CD4-positive, alpha-beta memory T cell (primary cell): ENCODE measurements at regions of chr2 and their contacts with region 1.

Region 1: GRCh38 chr2:30421604-30422443 is 25.2 kb upstream of the LCLAT1 start:
- DNase-seq: peak in 4 of 5 donors; percentile 16 to 58 (median 26)
- H3K4me3 ChIP-seq: no peak overlapping the region
- H3K4me3 Mint-ChIP-seq: peak overlapping the region; percentile 23 to 74 (median 61)
- H3K27ac ChIP-seq: peak overlapping the region; percentile 40
- H3K27ac Mint-ChIP-seq: peak overlapping the region; percentile 68 to 93 (median 84)
- H3K4me1 ChIP-seq: peaks cover 33% of the 10 kb centered on the region
- H3K4me1 Mint-ChIP-seq: peaks cover 26 to 47% (median 31%) of the 10 kb centered on the region in 4 donors
- H3K27me3 ChIP-seq: no peaks in the 10 kb centered on the region
- H3K27me3 Mint-ChIP-seq: no peaks in the 10 kb centered on the region

Region 2: DNA sequence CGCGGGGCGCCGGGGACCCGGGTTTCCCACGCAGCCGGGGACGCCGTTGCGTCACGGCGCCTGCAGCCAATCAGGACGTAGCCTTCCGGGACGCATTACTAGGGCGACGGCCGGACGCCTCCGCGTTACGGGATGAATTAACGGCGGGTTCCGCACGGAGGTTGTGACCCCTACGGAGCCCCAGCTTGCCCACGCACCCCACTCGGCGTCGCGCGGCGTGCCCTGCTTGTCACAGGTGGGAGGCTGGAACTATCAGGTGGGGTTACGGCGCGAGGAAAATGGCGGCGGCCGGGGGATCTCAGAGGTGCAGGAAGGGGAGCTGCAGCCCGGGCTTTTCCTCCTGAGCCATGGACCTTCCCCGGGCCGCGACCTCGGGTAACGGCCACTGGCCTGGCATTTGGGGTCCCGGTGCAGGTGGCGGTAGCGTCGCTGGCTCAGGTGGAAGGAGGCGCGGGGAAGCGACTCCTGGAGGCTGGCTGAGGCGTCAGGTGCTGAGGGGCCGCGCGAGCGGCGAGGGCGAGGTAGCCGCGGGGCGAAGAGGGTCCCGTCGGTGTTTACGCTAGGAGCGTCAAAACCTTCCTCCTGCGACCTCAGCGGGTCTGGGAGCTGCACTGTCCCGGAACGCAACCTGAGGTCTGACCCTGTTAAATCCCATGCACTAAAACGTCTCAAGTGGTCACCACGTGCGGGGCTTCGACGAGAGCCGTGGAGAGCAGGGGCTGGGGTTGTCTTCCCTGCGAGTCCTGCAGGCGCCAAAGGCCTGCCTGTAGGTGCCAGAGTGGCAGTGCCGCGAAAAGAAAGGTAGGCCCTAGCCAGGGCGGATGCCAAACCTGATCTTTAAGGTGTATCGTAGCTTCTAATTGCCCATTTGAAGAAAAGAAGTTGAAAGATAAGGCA is 25.6 kb after region 1 on chr2 and contains the start of gene LCLAT1:
- CTCF ChIA-PET with region 1: interaction called, 4 read pairs
- POLR2A ChIA-PET with region 1: interaction called, 15 read pairs
- intact Hi-C with region 1: loop called (anchors 1 kb)
- DNase-seq: peak; percentile 87 to 88 (median 88)
- H3K4me3 ChIP-seq: peak within 1 kb of the TSS; percentile 48 to 96
- H3K4me3 Mint-ChIP-seq: peak within 1 kb of the TSS; percentile 95 to 99 (median 96)
- H3K27ac ChIP-seq: peak within 1 kb of the TSS; percentile 83
- H3K27ac Mint-ChIP-seq: peak within 1 kb of the TSS; percentile 89 to 99 (median 98)
- H3K4me1 ChIP-seq: peaks cover 27% of the 10 kb centered on the region
- H3K4me1 Mint-ChIP-seq: peaks cover 23 to 40% (median 30%) of the 10 kb centered on the region in 4 donors
- H3K27me3 ChIP-seq: no peaks in the 10 kb centered on the region
- H3K27me3 Mint-ChIP-seq: peaks cover 0 to 1% of the 10 kb centered on the region in 2 donors
- total RNA-seq, gene LCLAT1: 11.5 to 14.1 TPM